Panc1 (cell line): ENCODE measurements at regions of chr22 and their contacts with region 1.

Region 1: GRCh38 chr22:20495861-20496681 is 476 bp upstream of the KLHL22 start:
- DNase-seq: peak; percentile 64
- ATAC-seq: peak; percentile 96
- H3K4me3 ChIP-seq: peak overlapping the region; percentile 70 to 82
- H3K27ac ChIP-seq: peak overlapping the region; percentile 95
- H3K4me1 ChIP-seq: no peaks in the 10 kb centered on the region; the same call in 1 of the 2 replicates
- H3K27me3 ChIP-seq: no peaks in the 10 kb centered on the region
- CTCF ChIP-seq: peak; percentile 91

Region 2: DNA sequence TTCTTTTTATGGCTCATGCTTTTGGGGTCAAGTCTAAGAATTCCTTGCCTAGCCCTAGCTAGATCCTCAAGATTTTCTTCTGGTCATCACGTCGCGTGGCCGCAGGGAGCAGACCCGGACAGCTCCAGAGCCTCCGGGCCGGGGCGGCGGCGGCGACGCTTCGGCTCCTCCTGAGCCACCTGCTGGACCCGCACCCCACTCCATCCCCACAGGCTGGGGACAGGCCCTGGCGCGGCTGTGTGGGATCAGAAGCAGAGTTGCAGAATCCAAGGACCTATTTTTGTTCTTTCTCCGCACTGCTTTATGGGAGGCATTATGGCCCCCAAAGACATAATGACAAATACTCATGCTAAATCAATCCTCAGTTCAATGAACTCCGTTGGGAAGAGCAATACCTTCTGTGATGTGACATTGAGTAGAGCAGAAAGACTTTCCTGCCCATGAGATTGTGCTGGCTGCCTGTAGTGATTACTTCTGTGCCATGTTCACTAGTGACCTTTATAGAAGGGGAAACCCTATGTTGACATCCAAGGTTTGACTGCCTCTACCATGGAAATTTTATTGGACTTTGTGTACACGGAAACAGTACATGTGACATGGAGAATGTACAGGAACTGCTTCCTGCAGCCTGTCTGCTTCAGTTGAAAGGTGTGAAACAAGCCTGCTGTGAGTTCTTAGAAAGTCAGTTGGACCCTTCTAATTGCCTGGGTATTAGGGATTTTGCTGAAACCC is 46.1 kb before region 1 on chr22:
- CTCF ChIA-PET with region 1: interaction called, 10 read pairs
- POLR2A ChIA-PET with region 1: no interaction called
- in situ Hi-C with region 1: no loop called
- intact Hi-C with region 1: no loop called
- DNase-seq: no peak
- ATAC-seq: no peak
- H3K4me3 ChIP-seq: no peak overlapping the region
- H3K27ac ChIP-seq: no peak overlapping the region
- H3K4me1 ChIP-seq: no peaks in the 10 kb centered on the region
- H3K27me3 ChIP-seq: no peaks in the 10 kb centered on the region
- CTCF ChIP-seq: no peak